ENCODE measurements at regions of chr11 and their contacts with region 1.

Region 1: GRCh38 chr11:87421422-87421821 is 383.7 kb downstream of the TMEM135 start:
- DNase-seq: peak; percentile 91
- H3K4me3 ChIP-seq: no peak overlapping the region
- H3K27ac ChIP-seq: no peak overlapping the region
- H3K4me1 ChIP-seq: peaks cover 16% of the 10 kb centered on the region
- H3K27me3 ChIP-seq: no peaks in the 10 kb centered on the region
- CTCF ChIP-seq: peak; percentile 67 to 75
- POLR2A ChIP-seq: no peak

Region 2: GRCh38 chr11:86990515-86990914 is 430.9 kb before region 1 on chr11:
- CTCF ChIA-PET with region 1: interaction called, 26 read pairs
- POLR2A ChIA-PET with region 1: no interaction called
- dilution Hi-C with region 1: no loop called
- intact Hi-C with region 1: no loop called
- DNase-seq: no peak
- H3K4me3 ChIP-seq: no peak overlapping the region
- H3K27ac ChIP-seq: no peak overlapping the region
- H3K4me1 ChIP-seq: peaks cover 10% of the 10 kb centered on the region
- H3K27me3 ChIP-seq: no peaks in the 10 kb centered on the region
- CTCF ChIP-seq: no peak
- POLR2A ChIP-seq: no peak

Region 3: DNA sequence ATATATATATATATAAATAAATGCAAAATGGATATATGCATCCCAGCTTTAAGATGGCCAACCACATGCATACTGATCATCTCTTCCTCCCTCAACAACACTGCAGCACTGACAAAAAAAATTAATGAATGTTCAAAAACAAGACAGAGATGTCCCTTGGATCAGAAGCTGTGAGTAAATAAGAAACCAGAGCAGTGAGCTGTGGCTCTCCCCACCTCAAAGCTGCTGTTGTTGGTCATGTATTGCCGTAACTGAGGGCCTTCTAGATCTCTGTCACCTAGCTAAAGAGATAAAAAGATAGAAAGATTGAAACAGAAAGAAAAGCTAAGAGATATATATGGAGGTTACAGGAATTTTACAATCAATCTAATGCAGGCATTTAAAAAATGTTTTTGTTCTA is 399.2 kb before region 1 on chr11:
- CTCF ChIA-PET with region 1: no interaction called
- POLR2A ChIA-PET with region 1: no interaction called
- dilution Hi-C with region 1: no loop called
- intact Hi-C with region 1: no loop called
- DNase-seq: no peak
- H3K4me3 ChIP-seq: no peak overlapping the region
- H3K27ac ChIP-seq: no peak overlapping the region
- H3K4me1 ChIP-seq: peaks cover 12% of the 10 kb centered on the region
- H3K27me3 ChIP-seq: no peaks in the 10 kb centered on the region
- CTCF ChIP-seq: no peak
- POLR2A ChIP-seq: no peak

Region 4: GRCh38 chr11:87352759-87353707 is 68.4 kb before region 1 on chr11:
- CTCF ChIA-PET with region 1: interaction called, 415 read pairs
- POLR2A ChIA-PET with region 1: interaction called, 11 read pairs
- dilution Hi-C with region 1: no loop called
- intact Hi-C with region 1: loop called (anchors 1 kb)
- DNase-seq: peak; percentile 89
- H3K4me3 ChIP-seq: no peak overlapping the region
- H3K27ac ChIP-seq: peak overlapping the region; percentile 62
- H3K4me1 ChIP-seq: peaks cover 18% of the 10 kb centered on the region
- H3K27me3 ChIP-seq: no peaks in the 10 kb centered on the region
- CTCF ChIP-seq: peak; percentile 96 to 97
- POLR2A ChIP-seq: no peak

Region 5: GRCh38 chr11:87394924-87395323 is 26.5 kb before region 1 on chr11:
- CTCF ChIA-PET with region 1: interaction called, 12 read pairs
- POLR2A ChIA-PET with region 1: no interaction called
- dilution Hi-C with region 1: no loop called
- intact Hi-C with region 1: no loop called
- DNase-seq: no peak
- H3K4me3 ChIP-seq: no peak overlapping the region
- H3K27ac ChIP-seq: no peak overlapping the region
- H3K4me1 ChIP-seq: peaks cover 2% of the 10 kb centered on the region
- H3K27me3 ChIP-seq: no peaks in the 10 kb centered on the region
- CTCF ChIP-seq: no peak
- POLR2A ChIP-seq: no peak

Region 6: GRCh38 chr11:87432022-87432421 is 10.6 kb after region 1 on chr11:
- CTCF ChIA-PET with region 1: interaction called, 19 read pairs
- POLR2A ChIA-PET with region 1: no interaction called
- dilution Hi-C with region 1: no loop called
- intact Hi-C with region 1: no loop called
- DNase-seq: no peak
- H3K4me3 ChIP-seq: no peak overlapping the region
- H3K27ac ChIP-seq: no peak overlapping the region
- H3K4me1 ChIP-seq: peaks cover 9% of the 10 kb centered on the region
- H3K27me3 ChIP-seq: no peaks in the 10 kb centered on the region
- CTCF ChIP-seq: no peak
- POLR2A ChIP-seq: no peak